ENCODE measurements at regions of chr2 and their contacts with region 1.

Region 1: GRCh38 chr2:169824373-169825333 is at the start of gene METTL5:
- DNase-seq: peak; percentile 93
- ATAC-seq: peak; percentile 75
- total RNA-seq, gene METTL5: 69.8 TPM

Region 2: DNA sequence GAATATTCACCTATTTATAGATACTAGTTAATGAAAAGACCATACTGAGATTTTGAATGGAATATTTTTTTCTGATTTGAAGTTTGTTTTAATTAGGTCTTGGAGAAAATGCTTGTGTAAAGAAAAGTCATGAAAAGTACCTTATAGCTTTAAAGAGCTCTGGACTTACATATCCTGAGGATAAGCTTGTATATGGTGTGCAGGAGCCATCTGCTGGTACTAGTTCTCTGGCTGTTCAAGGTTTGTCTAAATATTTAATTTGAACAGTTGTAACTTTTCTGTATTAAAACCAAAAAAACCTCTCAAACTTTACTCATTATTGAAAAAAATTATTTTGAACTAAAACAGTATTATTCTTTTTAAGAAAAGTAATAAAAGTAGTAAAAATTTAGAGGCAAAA is 52.7 kb after region 1 on chr2:
- intact Hi-C with region 1: loop called (anchors 1 kb)
- DNase-seq: no peak
- ATAC-seq: peak; percentile 50

Region 3: GRCh38 chr2:169928463-169928864 is 103.8 kb after region 1 on chr2:
- intact Hi-C with region 1: loop called (anchors 5 kb)
- DNase-seq: no peak
- ATAC-seq: no peak

Measured in Right ventricle myocardium inferior (tissue), 1 donor.